Astrocyte of the cerebellum (primary cell): ENCODE measurements at regions of chrX and their contacts with region 1.

Region 1: GRCh38 chrX:29922607-29923006 is 292.8 kb upstream of the MAGEB2 start:
- DNase-seq: no peak
- H3K4me3 ChIP-seq: no peak overlapping the region
- CTCF ChIP-seq: no peak

Region 2: GRCh38 chrX:29834764-29835163 is 87.8 kb before region 1 on chrX:
- in situ Hi-C with region 1: no loop called
- DNase-seq: no peak
- H3K4me3 ChIP-seq: no peak overlapping the region
- CTCF ChIP-seq: no peak

Region 3: DNA sequence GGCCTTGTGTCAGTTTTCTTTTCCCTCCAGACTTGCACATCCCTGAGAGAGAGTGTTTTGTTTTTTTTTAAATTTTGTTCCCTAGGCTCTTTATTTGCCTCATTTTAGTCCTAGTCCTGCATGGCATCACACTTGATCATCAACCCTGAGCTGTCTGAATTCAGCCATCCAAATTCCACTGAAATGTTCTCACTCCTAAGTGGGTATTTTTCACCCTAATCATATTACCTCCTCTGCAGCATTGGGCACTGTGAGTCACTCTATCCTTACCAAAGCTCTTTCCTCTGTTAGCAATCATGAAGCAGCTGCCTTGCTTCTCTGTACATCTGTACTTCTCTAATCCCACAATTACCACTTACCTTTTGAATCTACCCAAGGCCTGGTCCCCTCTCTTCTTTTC is 63.9 kb before region 1 on chrX:
- in situ Hi-C with region 1: no loop called
- DNase-seq: no peak
- H3K4me3 ChIP-seq: no peak overlapping the region
- CTCF ChIP-seq: no peak

Region 4: DNA sequence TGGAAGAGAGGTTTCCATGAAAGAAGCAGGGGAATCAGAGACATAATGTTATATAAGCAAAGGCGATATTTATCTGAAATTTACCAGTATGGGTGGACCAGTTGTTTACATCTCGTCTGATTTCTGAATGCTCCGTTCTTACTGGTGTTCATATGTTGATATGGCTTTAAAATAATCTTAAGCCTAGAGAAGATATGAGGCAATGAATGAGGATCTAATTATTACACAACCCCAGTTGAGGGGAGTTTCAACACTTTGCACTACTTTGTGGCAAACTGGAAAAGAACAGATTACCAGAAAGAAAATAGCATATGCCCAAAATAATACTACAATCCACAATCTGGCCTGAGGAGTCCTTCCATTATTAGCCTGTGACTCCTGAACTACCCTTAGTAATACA is 29.4 kb after region 1 on chrX:
- in situ Hi-C with region 1: no loop called
- DNase-seq: no peak
- H3K4me3 ChIP-seq: no peak overlapping the region
- CTCF ChIP-seq: no peak

Region 5: GRCh38 chrX:30005813-30006212 is 83.2 kb after region 1 on chrX:
- in situ Hi-C with region 1: loop called (anchors 5 kb)
- DNase-seq: no peak
- H3K4me3 ChIP-seq: no peak overlapping the region
- CTCF ChIP-seq: no peak